ENCODE measurements at regions of chr16 and their contacts with region 1.

Region 1: DNA sequence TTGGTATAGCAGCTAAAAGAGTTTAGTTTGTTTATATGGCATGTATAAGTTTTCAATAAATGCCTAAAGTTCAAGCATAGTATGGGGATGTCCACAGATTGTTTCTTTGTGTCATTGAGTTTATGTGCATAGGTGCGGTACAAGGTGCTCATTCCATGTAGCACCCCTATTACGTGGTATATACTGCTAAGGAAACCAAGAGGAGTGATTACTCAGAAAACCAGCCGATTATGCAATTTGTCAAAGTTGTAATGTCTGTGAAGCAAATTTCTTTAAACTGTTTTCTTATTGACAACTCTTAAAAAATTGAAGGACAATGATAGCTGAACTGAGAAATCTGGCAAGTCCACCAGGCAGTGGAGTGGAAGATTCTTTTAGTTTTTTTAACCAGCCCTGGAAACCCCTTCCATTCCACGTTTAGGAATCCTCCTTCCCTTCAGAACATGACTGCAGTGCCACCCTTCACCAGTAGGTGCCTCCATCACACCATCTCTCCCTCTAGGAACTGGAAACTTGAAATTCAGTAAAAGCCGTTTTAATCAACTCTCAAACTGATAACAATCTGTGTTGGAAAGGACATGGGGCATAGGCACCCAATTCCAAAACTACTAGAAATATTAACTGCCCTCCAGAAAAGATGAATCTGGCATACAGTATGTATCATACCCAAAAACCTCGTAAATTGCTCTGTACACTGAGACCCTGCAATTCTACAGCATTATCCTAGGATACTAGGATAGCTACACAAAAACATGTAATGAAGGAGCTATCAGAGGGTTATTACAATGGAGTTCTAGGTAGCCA is 43.5 kb downstream of the REXO5 start:
- DNase-seq: peak; percentile 88
- ATAC-seq: peak; percentile 62

Region 2: GRCh38 chr16:20838240-20838639 is 11.5 kb before region 1 on chr16:
- intact Hi-C with region 1: no loop called
- DNase-seq: no peak
- ATAC-seq: no peak

Region 3: GRCh38 chr16:20900299-20901067 is 50.7 kb after region 1 on chr16 and contains the starts of genes DCUN1D3 and LYRM1:
- intact Hi-C with region 1: loop called (anchors 2 kb)
- DNase-seq: peak; percentile 97
- ATAC-seq: peak; percentile 95
- total RNA-seq, gene DCUN1D3: 30.7 TPM
- total RNA-seq, gene LYRM1: 25.6 TPM

Region 4: DNA sequence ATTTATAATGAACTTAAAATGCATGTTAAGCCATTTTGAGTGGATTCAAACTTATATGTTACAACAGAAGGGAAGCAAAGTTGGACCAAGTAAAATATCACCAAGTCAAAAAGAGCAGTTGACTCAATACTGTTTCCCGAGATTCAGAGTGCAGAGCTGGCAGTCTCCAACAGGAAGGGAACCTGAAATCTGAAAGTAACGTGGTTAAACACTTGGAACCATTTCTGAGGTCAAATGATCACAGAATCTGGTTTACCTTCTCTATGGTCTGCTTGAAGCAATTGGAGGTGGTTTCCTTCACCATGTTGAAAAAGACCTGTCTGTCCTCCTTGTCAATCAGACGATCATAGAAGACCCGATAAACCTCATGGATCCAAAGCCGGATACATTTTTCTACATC is 137.3 kb after region 1 on chr16:
- intact Hi-C with region 1: loop called (anchors 10 kb)
- DNase-seq: peak; percentile 2
- ATAC-seq: no peak

Region 5: DNA sequence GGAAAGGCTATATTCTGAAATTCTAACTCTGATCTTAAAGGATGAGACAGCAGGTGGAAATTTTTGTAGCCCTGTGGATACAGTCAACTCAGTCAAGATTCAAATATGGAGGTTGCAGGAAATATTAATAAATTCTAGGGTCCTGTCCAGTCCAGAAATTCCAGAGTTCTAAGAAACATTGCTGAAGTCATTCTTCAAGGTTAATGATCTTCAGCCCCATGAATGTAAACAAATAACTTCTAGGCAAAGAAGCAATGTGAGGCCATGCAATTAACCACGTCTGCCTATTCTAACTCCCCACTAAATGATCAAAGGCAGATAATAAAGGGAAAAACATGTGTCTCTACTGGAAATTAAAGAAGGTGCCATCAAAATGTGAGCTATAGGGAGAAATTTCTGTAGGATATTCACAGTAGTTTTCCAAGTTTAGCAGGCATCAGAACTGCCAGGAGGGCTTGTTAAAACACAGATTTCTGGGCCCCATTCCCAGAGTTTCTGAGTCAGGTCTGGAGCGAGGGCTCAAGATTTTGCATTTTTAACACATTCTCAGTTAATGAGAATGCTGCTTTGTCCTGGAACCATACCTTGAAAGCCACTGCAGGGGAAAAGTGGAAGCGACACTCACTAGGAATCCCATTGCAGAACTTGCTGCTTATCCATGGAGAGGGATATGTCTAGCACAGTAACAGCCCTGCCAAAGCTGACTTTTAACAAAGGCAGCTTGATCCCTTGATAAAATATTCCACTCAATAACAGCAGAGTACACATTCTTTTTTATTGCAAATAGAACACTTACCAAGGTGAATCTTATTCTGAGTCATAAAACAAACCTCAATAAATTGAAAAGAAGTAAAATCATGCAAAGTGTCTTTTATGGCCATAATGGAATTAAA is 239.1 kb after region 1 on chr16:
- intact Hi-C with region 1: loop called (anchors 5 kb)
- DNase-seq: no peak
- ATAC-seq: no peak